CD4-positive, alpha-beta memory T cell (primary cell): ENCODE measurements at regions of chr2 and their contacts with region 1.

Region 1: GRCh38 chr2:233331536-233331935 is 22.8 kb upstream of the DGKD start:
- DNase-seq: peak; percentile 84 to 93 (median 86)
- H3K4me3 ChIP-seq: peak overlapping the region in 1 of 2 donors; percentile 39
- H3K4me3 Mint-ChIP-seq: peak overlapping the region; percentile 11 to 83 (median 72)
- H3K27ac ChIP-seq: peak overlapping the region; percentile 73
- H3K27ac Mint-ChIP-seq: peak overlapping the region; percentile 82 to 99 (median 94)
- H3K4me1 ChIP-seq: peaks cover 63% of the 10 kb centered on the region
- H3K4me1 Mint-ChIP-seq: peaks cover 26 to 65% (median 43%) of the 10 kb centered on the region in 4 donors
- H3K27me3 ChIP-seq: no peaks in the 10 kb centered on the region
- H3K27me3 Mint-ChIP-seq: no peaks in the 10 kb centered on the region

Region 2: DNA sequence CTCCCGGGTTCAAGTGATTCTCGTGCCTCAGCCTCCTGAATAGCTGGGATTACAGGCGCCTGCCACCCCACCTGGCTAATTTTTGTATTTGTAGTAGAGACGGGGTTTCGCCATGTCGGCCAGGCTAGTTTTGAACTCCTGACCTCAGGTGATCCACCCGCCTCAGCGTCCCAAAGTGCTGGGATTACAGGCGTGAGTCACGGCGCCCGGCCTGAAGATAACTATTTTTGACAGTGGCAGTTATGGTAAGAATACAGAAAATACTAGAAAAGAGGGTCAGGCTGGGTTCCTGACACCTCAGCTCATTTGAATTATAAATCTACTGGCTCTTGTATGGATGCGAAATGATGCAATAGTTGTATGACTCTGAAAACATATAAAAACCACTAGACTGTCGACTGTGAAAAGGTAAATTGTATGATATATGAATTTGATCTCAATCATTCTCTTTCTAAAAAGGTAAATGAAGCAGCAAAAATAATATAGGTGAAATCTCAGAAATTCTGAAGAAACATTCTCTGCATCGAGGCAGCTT is 11.7 kb after region 1 on chr2:
- CTCF ChIA-PET with region 1: interaction called, 13 read pairs
- POLR2A ChIA-PET with region 1: interaction called, 7 read pairs
- intact Hi-C with region 1: no loop called
- DNase-seq: no peak
- H3K4me3 ChIP-seq: no peak overlapping the region
- H3K4me3 Mint-ChIP-seq: no peak overlapping the region
- H3K27ac ChIP-seq: no peak overlapping the region
- H3K27ac Mint-ChIP-seq: no peak overlapping the region
- H3K4me1 ChIP-seq: peaks cover 6% of the 10 kb centered on the region
- H3K4me1 Mint-ChIP-seq: peaks cover 2 to 12% (median 4%) of the 10 kb centered on the region in 4 donors
- H3K27me3 ChIP-seq: no peaks in the 10 kb centered on the region
- H3K27me3 Mint-ChIP-seq: peaks cover 0 to 2% of the 10 kb centered on the region in 2 donors

Region 3: DNA sequence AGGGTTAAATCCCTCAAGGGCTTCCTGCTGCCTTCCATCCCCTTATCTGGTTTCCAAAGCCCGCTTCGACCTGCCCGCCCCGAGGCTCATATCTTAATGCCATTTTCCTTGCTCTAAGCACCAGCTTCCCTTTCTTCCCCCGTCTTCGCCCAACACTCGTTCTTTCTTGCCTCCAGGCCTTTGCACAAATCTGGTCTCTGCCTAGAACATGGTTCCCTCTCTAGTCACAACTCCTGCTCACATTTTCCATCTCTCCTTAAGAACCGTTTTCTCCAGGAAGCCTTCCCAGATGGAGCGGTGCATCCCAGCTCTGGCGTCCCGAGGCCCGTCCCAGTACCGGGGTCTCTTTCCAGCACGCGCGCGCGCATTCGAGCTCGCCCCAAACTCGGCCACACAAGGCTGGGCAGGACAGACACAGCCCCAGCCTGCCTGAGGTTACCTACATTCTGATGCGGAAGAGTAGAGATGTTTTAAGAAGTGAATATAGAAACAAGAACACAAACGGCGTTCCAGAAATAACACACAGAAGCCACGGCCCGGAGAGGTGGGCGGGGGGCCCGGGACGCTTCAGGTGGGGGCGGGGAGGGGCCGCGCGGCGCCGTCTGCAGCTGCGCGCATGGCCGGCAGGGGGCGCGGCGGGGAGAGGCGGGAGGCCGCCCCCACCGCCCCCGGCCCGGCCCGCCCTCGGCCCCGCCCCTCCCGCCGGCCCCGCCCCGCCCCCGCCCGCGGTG is 22.4 kb after region 1 on chr2 and contains the start of gene DGKD:
- CTCF ChIA-PET with region 1: interaction called, 24 read pairs
- POLR2A ChIA-PET with region 1: interaction called, 44 read pairs
- intact Hi-C with region 1: loop called (anchors 1 kb)
- DNase-seq: peak; percentile 63 to 72 (median 65)
- H3K4me3 ChIP-seq: peak within 1 kb of the TSS; percentile 75 to 76
- H3K4me3 Mint-ChIP-seq: peak within 1 kb of the TSS; percentile 89 to 98 (median 94)
- H3K27ac ChIP-seq: peak within 1 kb of the TSS; percentile 55
- H3K27ac Mint-ChIP-seq: peak within 1 kb of the TSS; percentile 91 to 97 (median 92)
- H3K4me1 ChIP-seq: peaks cover 48% of the 10 kb centered on the region
- H3K4me1 Mint-ChIP-seq: peaks cover 51 to 75% (median 57%) of the 10 kb centered on the region in 4 donors
- H3K27me3 ChIP-seq: no peaks in the 10 kb centered on the region
- H3K27me3 Mint-ChIP-seq: peaks cover 0 to 1% of the 10 kb centered on the region in 2 donors
- total RNA-seq, gene DGKD: 129 to 136 TPM